ENCODE measurements at regions of chr1 and their contacts with region 1.

Region 1: GRCh38 chr1:111628153-111628552 is 8.6 kb downstream of the RAP1A start:
- DNase-seq: no peak
- ATAC-seq: no peak
- H3K4me3 ChIP-seq: no peak overlapping the region
- H3K27ac ChIP-seq: no peak overlapping the region
- H3K4me1 ChIP-seq: peaks cover 60% of the 10 kb centered on the region
- H3K27me3 ChIP-seq: no peaks in the 10 kb centered on the region
- CTCF ChIP-seq: no peak

Region 2: GRCh38 chr1:110850636-110851035 is 777.5 kb before region 1 on chr1:
- intact Hi-C with region 1: no loop called
- DNase-seq: no peak
- ATAC-seq: no peak
- H3K4me3 ChIP-seq: no peak overlapping the region
- H3K27ac ChIP-seq: no peak overlapping the region
- H3K4me1 ChIP-seq: no peaks in the 10 kb centered on the region
- H3K27me3 ChIP-seq: peaks cover 0 to 1% (median 0%) of the 10 kb centered on the region in 3 donors
- CTCF ChIP-seq: no peak

Region 3: GRCh38 chr1:111139956-111140679 is 488.0 kb before region 1 on chr1 and contains the starts of genes CEPT1 and DRAM2:
- intact Hi-C with region 1: no loop called
- DNase-seq: peak; percentile 96
- ATAC-seq: peak; percentile 96 to 97 (median 97)
- H3K4me3 ChIP-seq: peak within 1 kb of the TSS; percentile 96
- H3K27ac ChIP-seq: peak within 1 kb of the TSS; percentile 93
- H3K4me1 ChIP-seq: peaks cover 36% of the 10 kb centered on the region
- H3K27me3 ChIP-seq: no peaks in the 10 kb centered on the region
- CTCF ChIP-seq: peak; percentile 3
- total RNA-seq, gene CEPT1: 9.2 to 11.2 (median 10.1) TPM
- total RNA-seq, gene DRAM2: 19.2 to 28.0 (median 24.2) TPM

Region 4: GRCh38 chr1:111565079-111565478 is 63.1 kb before region 1 on chr1:
- intact Hi-C with region 1: no loop called
- DNase-seq: no peak
- ATAC-seq: no peak
- H3K4me3 ChIP-seq: no peak overlapping the region
- H3K27ac ChIP-seq: no peak overlapping the region
- H3K4me1 ChIP-seq: no peaks in the 10 kb centered on the region
- H3K27me3 ChIP-seq: no peaks in the 10 kb centered on the region
- CTCF ChIP-seq: no peak

Region 5: DNA sequence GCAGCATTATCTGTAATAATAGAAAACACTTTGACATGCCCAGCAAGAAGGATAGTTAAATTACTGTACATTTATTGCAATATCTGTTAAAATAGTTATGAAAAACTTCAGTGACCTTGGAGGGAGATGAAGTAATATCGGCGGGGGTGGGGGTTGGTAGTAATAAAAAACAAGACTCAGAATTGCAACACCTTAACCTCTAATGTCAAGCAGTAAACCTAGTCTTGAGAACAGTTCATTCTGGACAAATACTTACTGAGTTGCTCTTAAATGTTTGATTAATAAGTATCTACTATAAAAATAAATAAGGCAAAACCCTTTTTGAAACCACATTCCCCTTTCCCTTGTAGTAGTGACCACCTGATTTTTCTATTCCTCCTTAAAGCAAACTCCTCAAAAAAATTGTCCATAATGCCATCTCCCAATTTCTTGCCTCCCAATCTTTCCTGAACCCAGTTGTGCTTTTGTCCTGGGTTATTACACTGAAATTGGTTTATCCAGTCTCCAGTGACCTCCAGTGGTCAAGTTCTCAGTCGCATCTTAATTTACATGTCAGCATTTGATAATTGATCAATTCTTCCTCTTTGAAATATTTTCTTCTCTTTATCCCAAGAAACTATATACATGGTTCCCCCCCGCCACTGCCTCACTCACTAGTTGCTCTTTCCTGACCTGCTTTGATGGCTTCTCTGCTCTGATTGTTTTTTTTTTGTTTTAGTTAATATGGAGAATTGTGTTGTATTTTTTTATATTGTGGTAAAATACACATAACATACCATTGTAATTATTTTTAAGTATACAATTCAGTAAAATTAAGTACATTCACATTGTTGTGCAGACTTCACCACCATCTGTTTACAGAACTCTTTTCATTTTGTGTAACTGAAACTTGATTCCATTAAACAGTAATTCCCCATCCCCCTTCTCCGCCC is 28.2 kb after region 1 on chr1:
- intact Hi-C with region 1: loop called in 1 of 2 experiments (anchors 5 kb)
- DNase-seq: no peak
- ATAC-seq: peak; percentile 52 to 90 (median 68)
- H3K4me3 ChIP-seq: no peak overlapping the region
- H3K27ac ChIP-seq: no peak overlapping the region
- H3K4me1 ChIP-seq: peaks cover 28% of the 10 kb centered on the region
- H3K27me3 ChIP-seq: no peaks in the 10 kb centered on the region
- CTCF ChIP-seq: peak; percentile 70